Activated T-helper 1 cell treated with anti-CD3 and anti-CD28 coated beads, Interleukin-12 subunit alpha, Interleukin-12 subunit beta, Interleukin-2, Interleukin-4 antibody, amounts not matched to agents 30 ng/mL and 10 ng/mL and 1 ng/mL, durations not matched to agents 14 hours and 24 hours and 36 hours (primary cell): ENCODE measurements at regions of chr19 and their contacts with region 1.

Region 1: DNA sequence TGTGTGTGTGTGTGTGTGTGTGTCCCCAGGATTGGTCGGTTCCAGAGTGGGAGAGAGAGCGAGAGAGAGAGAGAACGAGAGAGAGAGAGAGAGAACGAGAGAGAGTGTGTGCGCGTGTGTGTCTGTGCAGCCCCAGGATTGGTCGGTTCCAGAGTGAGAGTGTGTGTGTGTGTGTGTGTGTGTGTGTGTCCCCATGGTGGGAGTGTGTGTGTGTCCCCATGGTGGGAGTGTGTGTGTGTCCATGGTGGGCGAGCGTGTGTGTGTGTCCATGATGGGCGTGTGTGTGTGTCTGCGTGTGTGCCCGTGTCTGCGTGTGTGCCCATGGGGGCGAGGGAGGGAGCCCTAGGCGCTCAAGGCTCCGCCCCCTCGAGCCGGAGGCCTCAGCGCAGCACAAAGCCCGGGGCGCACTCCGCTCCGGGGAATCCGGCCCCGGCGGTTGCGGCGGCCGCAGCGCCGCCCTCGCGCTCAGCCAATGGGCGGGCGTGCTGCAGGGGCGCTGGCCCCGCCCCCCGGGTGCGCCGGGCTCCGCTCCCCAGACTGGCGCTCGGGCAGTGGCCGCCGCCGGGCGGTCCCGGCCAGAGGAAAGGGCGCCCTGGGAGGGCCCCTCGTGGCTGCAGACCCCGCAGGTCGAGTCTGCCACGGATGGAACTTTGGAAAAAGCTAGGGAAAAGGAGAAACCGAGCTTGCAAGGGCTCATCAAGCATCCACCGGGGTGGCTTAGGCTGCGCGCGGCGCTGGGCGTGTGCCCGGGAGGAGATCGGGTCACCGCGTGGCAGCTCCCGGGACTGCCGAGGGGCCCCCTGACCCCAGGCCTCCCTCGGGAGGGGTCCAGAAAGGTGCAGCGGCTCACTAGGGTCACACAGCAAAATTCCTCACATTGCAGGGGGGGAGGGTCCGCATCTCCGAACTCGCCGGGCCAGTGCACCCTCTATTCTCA is 96.2 kb downstream of the INSR start:
- DNase-seq: peak; percentile 90
- H3K4me3 Mint-ChIP-seq: peak overlapping the region; percentile 81
- H3K27ac Mint-ChIP-seq: peak overlapping the region; percentile 95
- H3K4me1 Mint-ChIP-seq: peaks cover 18% of the 10 kb centered on the region
- H3K27me3 Mint-ChIP-seq: peaks cover 43% of the 10 kb centered on the region

Region 2: GRCh38 chr19:6811906-6812305 is 386.1 kb before region 1 on chr19:
- intact Hi-C with region 1: no loop called
- DNase-seq: no peak
- H3K4me3 Mint-ChIP-seq: no peak overlapping the region
- H3K27ac Mint-ChIP-seq: peak overlapping the region; percentile 49
- H3K4me1 Mint-ChIP-seq: peaks cover 51% of the 10 kb centered on the region
- H3K27me3 Mint-ChIP-seq: no peaks in the 10 kb centered on the region

Region 3: GRCh38 chr19:7098701-7099596 is 99.1 kb before region 1 on chr19:
- intact Hi-C with region 1: loop called (anchors 5 kb)
- DNase-seq: peak; percentile 84
- H3K4me3 Mint-ChIP-seq: peak overlapping the region; percentile 88
- H3K27ac Mint-ChIP-seq: peak overlapping the region; percentile 85
- H3K4me1 Mint-ChIP-seq: peaks cover 13% of the 10 kb centered on the region
- H3K27me3 Mint-ChIP-seq: peaks cover 4% of the 10 kb centered on the region

Region 4: DNA sequence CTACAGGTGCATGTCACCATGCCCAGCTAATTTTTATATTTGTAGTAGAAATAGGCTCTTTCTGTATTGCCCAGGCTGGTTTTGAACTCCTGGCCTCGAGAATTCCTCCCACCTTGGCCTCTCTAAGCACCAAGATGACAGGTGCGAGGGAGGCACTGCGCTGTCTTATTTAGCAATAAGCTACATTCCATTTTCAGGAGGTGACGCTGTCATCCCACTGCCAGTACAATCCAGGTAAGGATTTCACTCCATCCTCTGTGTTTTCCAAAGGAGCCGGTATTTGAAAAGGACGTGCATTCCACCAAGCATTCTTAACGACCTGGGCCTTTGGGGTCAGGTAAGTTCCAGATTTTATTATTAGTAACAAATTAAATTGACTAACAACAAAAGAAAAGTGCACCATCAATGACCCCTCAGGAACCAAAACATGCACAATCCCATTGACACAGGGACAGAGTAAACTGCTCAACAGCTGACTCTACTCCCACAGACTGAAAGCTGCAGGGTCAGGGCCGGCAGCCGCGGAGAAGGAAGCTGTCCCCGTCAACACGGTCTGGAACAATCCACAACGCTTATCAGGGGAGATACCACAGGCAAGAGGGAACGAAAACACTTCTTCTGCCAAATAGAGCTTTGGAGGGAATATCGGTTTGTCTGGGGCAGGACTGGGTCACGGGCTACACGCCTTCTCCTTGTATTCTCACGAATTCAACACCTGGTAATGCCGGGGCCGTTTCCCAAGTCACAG is 13.3 kb after region 1 on chr19:
- intact Hi-C with region 1: no loop called
- DNase-seq: no peak
- H3K4me3 Mint-ChIP-seq: no peak overlapping the region
- H3K27ac Mint-ChIP-seq: no peak overlapping the region
- H3K4me1 Mint-ChIP-seq: peaks cover 14% of the 10 kb centered on the region
- H3K27me3 Mint-ChIP-seq: no peaks in the 10 kb centered on the region

Region 5: DNA sequence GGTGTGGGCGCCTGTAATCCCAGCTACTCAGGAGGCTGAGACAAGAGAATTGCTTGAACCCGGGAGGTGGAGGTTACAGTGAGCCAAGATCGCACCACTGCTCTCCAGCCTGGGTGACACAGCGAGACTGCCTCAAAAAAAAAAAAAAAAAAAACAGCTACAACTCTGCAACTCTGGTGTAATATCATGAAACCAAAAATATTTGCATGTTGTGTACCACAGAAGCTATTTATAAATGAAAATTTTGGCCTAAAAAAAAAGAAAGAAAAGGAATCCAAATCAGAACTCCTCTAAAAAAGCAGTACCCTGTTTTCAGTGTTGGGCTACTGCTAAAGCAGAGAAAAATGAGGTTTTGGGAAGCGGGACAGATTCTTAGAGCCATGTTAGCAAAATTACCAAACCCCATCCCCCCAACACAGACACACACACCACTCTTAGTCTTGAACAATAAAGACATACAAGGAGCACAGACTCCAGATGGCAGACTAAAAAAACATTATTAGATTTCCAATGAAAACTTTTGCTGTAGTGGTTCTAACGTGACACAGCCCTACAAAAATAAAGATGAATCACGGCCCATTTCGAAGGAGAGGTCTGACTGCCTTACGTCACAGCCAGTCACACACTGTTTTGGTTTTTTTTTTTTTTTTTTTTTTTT is 44.7 kb after region 1 on chr19:
- intact Hi-C with region 1: no loop called
- DNase-seq: no peak
- H3K4me3 Mint-ChIP-seq: no peak overlapping the region
- H3K27ac Mint-ChIP-seq: no peak overlapping the region
- H3K4me1 Mint-ChIP-seq: no peaks in the 10 kb centered on the region
- H3K27me3 Mint-ChIP-seq: peaks cover 4% of the 10 kb centered on the region

Region 6: DNA sequence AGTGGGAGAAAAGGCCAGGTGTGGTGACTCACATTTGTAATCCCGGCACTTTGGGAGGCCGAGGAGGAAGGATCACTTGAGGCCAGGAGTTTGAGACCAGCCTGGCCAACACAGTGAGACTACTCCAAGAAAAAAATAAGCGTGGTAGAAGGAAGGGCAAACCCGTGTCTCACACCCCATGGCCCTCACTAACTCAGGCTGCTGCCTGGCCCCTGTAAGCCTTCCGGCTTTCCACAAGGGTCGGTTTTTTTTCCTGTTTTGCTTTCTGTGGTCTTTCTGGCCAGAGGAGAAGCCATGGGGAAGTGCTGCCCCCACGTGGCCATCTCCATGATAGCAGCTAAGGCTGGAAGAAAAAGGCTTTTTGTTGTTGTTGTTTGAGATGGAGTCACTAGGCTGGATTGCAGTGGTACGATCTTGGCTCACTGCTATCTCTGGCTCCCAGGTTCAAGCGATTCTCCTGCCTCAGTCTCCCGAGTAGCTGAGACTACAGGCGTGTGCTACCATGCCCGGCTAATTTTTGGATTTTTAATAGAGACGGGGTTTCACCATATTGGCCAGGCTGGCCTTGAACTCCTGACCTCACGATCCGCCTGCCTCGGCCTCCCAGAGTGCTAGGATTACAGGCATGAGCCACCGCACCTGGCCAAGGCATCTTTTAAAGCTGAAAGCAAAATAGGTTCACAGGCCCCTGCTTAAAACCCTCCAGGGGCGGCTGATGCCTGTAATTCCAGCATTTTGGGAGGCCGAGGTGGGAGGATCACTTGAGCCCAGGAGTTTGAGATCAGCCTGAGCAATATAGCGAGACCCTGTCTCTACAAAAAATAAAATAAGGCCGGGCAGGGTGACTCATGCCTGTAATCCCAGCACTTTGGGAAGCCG is 143.2 kb after region 1 on chr19:
- intact Hi-C with region 1: loop called (anchors 2 kb)
- DNase-seq: peak; percentile 70
- H3K4me3 Mint-ChIP-seq: no peak overlapping the region
- H3K27ac Mint-ChIP-seq: no peak overlapping the region
- H3K4me1 Mint-ChIP-seq: peaks cover 44% of the 10 kb centered on the region
- H3K27me3 Mint-ChIP-seq: peaks cover 5% of the 10 kb centered on the region

Region 7: DNA sequence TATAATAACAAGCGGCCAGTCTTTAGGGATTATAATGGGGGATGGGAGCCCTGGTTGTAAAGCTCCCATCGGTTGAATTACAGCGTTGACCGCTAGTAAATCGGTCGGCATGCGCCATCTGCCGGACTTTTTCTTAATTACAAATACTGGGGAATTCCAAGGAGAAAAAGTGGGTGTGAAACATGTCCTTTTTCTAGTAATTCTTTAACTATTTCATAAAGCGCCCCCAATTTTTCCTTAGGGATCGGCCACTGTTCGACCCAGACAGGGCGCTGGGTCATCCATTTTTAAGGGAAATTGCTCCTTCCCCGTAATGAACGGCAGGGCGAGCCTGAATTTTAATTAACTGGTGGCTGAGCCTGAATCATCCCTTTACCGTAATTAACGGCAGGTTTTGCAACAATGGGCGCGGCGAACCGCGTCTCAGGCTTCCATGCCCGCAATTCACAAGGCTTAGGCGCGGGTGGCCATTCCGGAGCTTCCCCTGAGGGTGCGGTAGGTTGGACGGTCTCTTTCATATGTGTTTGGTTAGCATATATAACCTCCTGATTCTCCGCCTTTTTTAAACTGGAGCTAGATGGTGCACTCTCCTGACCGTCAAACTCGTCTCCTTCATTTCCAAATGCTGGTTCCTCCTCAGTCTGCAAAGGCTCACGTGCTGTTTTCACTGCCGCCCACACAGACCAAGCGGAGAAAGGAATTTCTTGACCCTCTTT is 601.8 kb after region 1 on chr19:
- intact Hi-C with region 1: loop called (anchors 10 kb)
- DNase-seq: peak; percentile 37
- H3K4me3 Mint-ChIP-seq: no peak overlapping the region
- H3K27ac Mint-ChIP-seq: no peak overlapping the region
- H3K4me1 Mint-ChIP-seq: peaks cover 11% of the 10 kb centered on the region
- H3K27me3 Mint-ChIP-seq: peaks cover 36% of the 10 kb centered on the region

Region 8: DNA sequence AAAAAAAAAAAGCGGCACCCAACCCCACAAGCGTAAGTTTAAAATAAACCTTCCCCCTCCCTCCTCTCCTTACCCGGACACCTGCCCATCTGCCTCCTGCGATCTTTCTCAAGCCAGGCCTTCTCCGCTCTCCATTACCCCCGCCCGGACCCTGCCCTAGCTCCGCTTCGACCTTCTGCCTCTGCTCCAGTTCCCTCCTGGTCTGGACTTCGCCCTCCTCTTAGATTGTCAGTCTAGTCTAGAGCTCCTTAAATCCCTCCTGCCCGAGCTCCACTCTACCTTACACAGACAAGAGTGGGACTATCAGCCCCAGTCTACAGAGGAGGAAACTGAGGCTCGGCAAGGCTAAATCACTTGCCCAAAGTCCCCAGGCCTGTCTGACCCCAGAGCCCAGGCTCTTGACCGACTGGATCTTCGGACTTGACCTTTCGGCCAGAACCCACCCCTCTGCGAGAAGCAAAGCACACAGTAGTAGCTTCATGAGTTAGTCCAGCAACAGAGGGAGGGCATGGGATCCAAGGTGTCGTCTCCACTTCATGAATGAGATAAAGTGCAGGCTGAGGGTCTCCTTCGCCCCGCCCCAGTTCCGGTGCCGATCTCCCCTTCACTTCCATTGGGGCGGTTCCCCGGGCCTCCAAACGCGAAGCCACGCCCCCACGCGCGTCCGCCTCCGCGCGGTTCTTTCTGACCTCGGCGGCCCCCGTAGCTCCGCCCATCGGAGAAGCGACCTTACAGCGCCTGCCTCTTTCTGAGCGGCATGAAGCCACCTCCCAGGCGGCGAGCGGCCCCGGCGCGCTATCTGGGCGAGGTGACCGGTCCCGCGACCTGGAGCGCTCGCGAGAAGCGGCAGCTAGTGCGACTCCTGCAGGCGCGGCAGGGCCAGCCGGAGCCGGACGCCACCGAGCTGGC is 721.8 kb after region 1 on chr19 and contains the start of gene SNAPC2:
- intact Hi-C with region 1: loop called (anchors 2 kb)
- DNase-seq: peak; percentile 96
- H3K4me3 Mint-ChIP-seq: peak within 1 kb of the TSS; percentile 86
- H3K27ac Mint-ChIP-seq: peak within 1 kb of the TSS; percentile 93
- H3K4me1 Mint-ChIP-seq: peaks cover 22% of the 10 kb centered on the region
- H3K27me3 Mint-ChIP-seq: peaks cover 18% of the 10 kb centered on the region
- total RNA-seq, gene SNAPC2: 21.3 and 22.4 TPM in 2 replicates